Heart left ventricle (tissue), 16 donors: ENCODE measurements at regions of chr1 and their contacts with region 1.

Region 1: GRCh38 chr1:3624200-3625136 is at the start of gene TPRG1L:
- DNase-seq: peak; percentile 98 to 100 (median 99)
- ATAC-seq: peak; percentile 97 to 99 (median 98)
- H3K4me3 ChIP-seq: peak within 1 kb of the TSS; percentile 71 to 99 (median 96)
- H3K27ac ChIP-seq: peak within 1 kb of the TSS; percentile 56 to 88 (median 80)
- H3K4me1 ChIP-seq: peaks cover 0 to 34% (median 24%) of the 10 kb centered on the region in 12 donors
- H3K27me3 ChIP-seq: no peaks in the 10 kb centered on the region
- CTCF ChIP-seq: no peak
- POLR2A ChIP-seq: peak in 1 of 2 donors; percentile 59
- total RNA-seq, gene TPRG1L: 32.0 to 58.0 (median 48.8) TPM

Region 2: DNA sequence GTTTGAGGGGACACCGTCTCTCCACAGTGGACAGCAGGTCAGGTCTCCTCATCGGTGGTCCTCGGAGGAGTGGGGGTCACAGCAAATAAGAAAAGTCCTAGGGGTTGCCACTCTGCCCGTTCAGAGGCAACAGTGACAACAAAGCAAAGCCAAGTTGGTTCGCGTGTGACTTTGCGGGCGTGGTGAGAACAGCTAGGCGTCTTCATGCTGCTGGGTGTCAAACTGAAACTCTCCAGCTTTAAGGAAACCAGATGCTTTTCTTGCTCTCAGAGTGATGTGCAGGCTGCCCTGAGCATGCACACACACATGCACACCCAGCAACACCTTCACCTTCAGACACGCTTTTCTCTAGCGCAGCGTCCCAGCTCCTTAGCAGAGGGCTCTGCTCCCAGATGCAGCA is 240.1 kb before region 1 on chr1:
- intact Hi-C with region 1: no loop called
- DNase-seq: no peak
- ATAC-seq: no peak
- H3K4me3 ChIP-seq: no peak overlapping the region
- H3K27ac ChIP-seq: no peak overlapping the region
- H3K4me1 ChIP-seq: peaks cover 0 to 6% (median 0%) of the 10 kb centered on the region in 12 donors
- H3K27me3 ChIP-seq: peaks cover 0 to 14% (median 0%) of the 10 kb centered on the region in 9 donors
- CTCF ChIP-seq: no peak
- POLR2A ChIP-seq: no peak

Region 3: DNA sequence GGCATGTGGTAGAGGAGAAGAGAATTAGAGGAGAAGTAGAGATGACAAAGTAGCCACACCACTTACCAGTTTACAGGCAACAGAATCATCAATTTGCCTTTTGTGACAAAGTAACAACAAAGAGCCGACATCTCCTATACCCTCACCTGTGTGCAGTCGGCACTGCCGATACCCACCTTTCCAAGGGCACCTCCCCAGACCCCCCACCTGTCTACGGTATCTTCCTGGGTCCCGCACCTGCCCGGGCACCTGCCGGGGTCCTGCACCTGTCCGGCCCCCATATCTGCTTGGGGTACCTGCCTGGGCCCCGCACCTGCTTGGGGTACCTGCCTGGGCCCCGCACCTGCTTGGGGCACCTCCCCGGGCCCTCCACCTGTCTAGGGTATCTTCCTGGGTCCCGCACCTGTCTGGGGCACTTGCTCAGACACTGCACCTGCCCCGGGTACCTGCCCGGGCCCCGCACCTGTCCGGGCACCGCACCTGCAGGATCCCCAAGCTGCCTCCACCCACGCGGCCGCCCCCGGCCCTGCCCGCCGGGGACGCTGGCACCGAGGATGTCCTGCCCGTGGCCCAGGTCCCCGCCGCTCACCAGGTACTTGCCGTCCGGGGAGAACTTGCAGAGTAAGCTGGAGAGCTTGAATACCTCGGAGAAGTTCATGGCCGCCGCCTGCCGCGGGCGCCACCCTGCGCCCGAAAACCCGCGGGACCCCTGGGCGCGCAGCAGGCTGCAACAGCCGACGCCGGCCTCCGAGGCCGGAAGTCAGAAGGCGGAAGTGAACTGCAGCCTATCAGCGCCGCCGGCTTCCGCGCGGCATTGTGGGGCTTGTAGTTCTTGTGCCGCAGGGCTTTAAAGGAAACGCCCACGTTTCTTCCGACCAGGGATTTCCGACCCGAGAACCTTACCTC is 25.1 kb after region 1 on chr1 and contains the start of gene WRAP73:
- intact Hi-C with region 1: loop called in 1 of 10 experiments (anchors 2 kb)
- DNase-seq: peak; percentile 90 to 94 (median 93)
- ATAC-seq: peak; percentile 92 to 95 (median 94)
- H3K4me3 ChIP-seq: peak within 1 kb of the TSS; percentile 53 to 99 (median 92)
- H3K27ac ChIP-seq: peak within 1 kb of the TSS in 8 of 12 donors; percentile 19 to 65 (median 56)
- H3K4me1 ChIP-seq: peaks cover 6 to 45% (median 30%) of the 10 kb centered on the region in 12 donors
- H3K27me3 ChIP-seq: peaks cover 26 to 45% (median 33%) of the 10 kb centered on the region in 9 donors
- CTCF ChIP-seq: peak in 4 of 12 donors; percentile 8 to 41 (median 26)
- POLR2A ChIP-seq: peak; percentile 21 to 85
- total RNA-seq, gene WRAP73: 8.5 to 21.6 (median 11.3) TPM